ENCODE measurements at regions of chr4 and their contacts with region 1.

Region 1: GRCh38 chr4:105715692-105716278 is 7.2 kb downstream of the GSTCD start:
- DNase-seq: no peak
- ATAC-seq: no peak

Region 2: GRCh38 chr4:105140684-105141490 is 574.9 kb before region 1 on chr4:
- intact Hi-C with region 1: loop called (anchors 2 kb)
- DNase-seq: no peak
- ATAC-seq: peak; percentile 60

Region 3: GRCh38 chr4:105520817-105521790 is 194.7 kb before region 1 on chr4:
- intact Hi-C with region 1: loop called (anchors 2 kb)
- DNase-seq: no peak
- ATAC-seq: no peak